PC-9 (cell line): ENCODE measurements at regions of chr4 and their contacts with region 1.

Region 1: GRCh38 chr4:87465739-87466366 is 43.5 kb downstream of the NUDT9 start:
- DNase-seq: no peak
- H3K4me3 ChIP-seq: no peak overlapping the region
- H3K27ac ChIP-seq: no peak overlapping the region
- H3K4me1 ChIP-seq: 0 out of 2 replicates have a peak, but pooled peaks cover 1% of the 10 kb centered on the region
- H3K27me3 ChIP-seq: no peaks in the 10 kb centered on the region
- CTCF ChIP-seq: peak; percentile 72

Region 2: DNA sequence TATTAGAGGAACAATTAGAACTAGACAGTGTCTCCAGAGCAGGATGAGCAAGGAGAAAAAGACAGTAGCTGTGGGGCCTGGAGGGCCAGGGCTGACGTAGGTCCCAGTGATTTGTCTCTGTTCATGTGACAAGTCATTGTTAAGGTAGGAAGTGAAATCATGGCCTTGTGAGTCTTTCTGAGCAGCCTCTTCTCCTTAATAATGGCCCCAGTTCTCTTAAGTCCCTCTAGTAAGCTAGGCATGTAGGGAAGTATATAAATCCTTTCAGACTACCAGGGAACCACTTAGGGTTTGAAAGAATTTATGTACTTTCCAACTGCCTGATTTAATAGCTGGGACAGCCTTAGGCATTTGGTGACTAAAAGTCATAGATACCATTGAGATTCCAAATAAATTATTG is 378.4 kb before region 1 on chr4:
- CTCF ChIA-PET with region 1: no interaction called
- POLR2A ChIA-PET with region 1: no interaction called
- intact Hi-C with region 1: no loop called
- DNase-seq: no peak
- H3K4me3 ChIP-seq: no peak overlapping the region
- H3K27ac ChIP-seq: no peak overlapping the region
- H3K4me1 ChIP-seq: peaks cover 16% of the 10 kb centered on the region
- H3K27me3 ChIP-seq: no peaks in the 10 kb centered on the region
- CTCF ChIP-seq: no peak

Region 3: GRCh38 chr4:87375719-87376291 is 90.0 kb before region 1 on chr4:
- CTCF ChIA-PET with region 1: no interaction called
- POLR2A ChIA-PET with region 1: no interaction called
- intact Hi-C with region 1: loop called (anchors 1 kb)
- DNase-seq: no peak
- H3K4me3 ChIP-seq: no peak overlapping the region
- H3K27ac ChIP-seq: no peak overlapping the region
- H3K4me1 ChIP-seq: no peaks in the 10 kb centered on the region
- H3K27me3 ChIP-seq: no peaks in the 10 kb centered on the region
- CTCF ChIP-seq: peak; percentile 64